MCF 10A (cell line): ENCODE measurements at regions of chr18 and their contacts with region 1.

Region 1: GRCh38 chr18:50356036-50356945 is 18.6 kb upstream of the SKA1 start:
- DNase-seq: peak; percentile 71
- H3K4me3 Mint-ChIP-seq: no peak overlapping the region
- H3K27ac Mint-ChIP-seq: peak overlapping the region; percentile 78
- H3K4me1 Mint-ChIP-seq: peaks cover 15% of the 10 kb centered on the region
- H3K27me3 Mint-ChIP-seq: peaks cover 28% of the 10 kb centered on the region
- CTCF ChIP-seq: no peak

Region 2: GRCh38 chr18:50009773-50010335 is 346.4 kb before region 1 on chr18:
- CTCF ChIA-PET with region 1: interaction called, 5 read pairs
- POLR2A ChIA-PET with region 1: no interaction called
- intact Hi-C with region 1: loop called (anchors 1 kb)
- DNase-seq: peak; percentile 60
- H3K4me3 Mint-ChIP-seq: no peak overlapping the region
- H3K27ac Mint-ChIP-seq: peak overlapping the region; percentile 5
- H3K4me1 Mint-ChIP-seq: peaks cover 21% of the 10 kb centered on the region
- H3K27me3 Mint-ChIP-seq: no peaks in the 10 kb centered on the region
- CTCF ChIP-seq: peak; percentile 33

Region 3: GRCh38 chr18:50111265-50111792 is 245.0 kb before region 1 on chr18:
- CTCF ChIA-PET with region 1: interaction called, 4 read pairs
- POLR2A ChIA-PET with region 1: no interaction called
- intact Hi-C with region 1: loop called (anchors 10 kb)
- DNase-seq: peak; percentile 33
- H3K4me3 Mint-ChIP-seq: no peak overlapping the region
- H3K27ac Mint-ChIP-seq: no peak overlapping the region
- H3K4me1 Mint-ChIP-seq: peaks cover 7% of the 10 kb centered on the region
- H3K27me3 Mint-ChIP-seq: no peaks in the 10 kb centered on the region
- CTCF ChIP-seq: peak; percentile 16

Region 4: GRCh38 chr18:50218432-50219197 is 137.7 kb before region 1 on chr18:
- CTCF ChIA-PET with region 1: interaction called, 103 read pairs
- POLR2A ChIA-PET with region 1: interaction called, 6 read pairs
- intact Hi-C with region 1: loop called (anchors 1 kb)
- DNase-seq: peak; percentile 53
- H3K4me3 Mint-ChIP-seq: no peak overlapping the region
- H3K27ac Mint-ChIP-seq: no peak overlapping the region
- H3K4me1 Mint-ChIP-seq: no peaks in the 10 kb centered on the region
- H3K27me3 Mint-ChIP-seq: no peaks in the 10 kb centered on the region
- CTCF ChIP-seq: peak; percentile 53

Region 5: DNA sequence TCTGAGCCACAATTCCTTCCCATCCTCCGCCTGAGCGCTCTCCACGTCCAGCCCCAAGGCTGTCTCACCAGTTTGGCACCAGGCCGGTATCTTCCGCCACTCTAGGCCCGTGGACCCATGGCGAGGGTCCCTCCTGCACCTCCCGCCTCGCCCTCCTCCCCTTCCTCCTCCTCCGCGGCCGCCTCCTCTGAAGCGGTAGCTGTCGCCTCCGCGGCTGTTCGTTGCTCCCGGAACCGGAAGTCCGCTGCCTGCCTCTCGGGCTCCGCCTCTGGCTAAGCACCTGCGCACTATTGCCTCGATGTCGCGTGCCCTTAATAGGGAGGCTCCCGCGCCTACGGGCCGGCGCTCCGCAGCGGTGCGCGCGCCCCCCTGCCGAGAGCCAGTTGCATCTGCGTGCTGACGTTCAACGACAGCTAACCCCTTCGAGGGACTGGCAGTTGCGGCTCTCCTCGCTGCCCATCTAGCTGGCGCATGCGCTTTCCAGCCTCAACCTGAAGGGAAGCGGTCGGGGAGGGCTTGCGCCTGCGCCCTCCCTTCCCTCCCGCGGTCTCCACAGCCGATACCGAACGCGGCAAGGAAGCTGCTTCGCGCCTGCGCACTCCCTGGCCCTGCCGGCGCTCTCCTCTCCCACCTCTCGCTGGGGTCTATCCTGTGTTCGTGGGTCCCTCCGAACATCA is 74.9 kb before region 1 on chr18 and contains the start of gene MBD1:
- CTCF ChIA-PET with region 1: interaction called, 15 read pairs
- POLR2A ChIA-PET with region 1: interaction called, 11 read pairs
- intact Hi-C with region 1: loop called (anchors 1 kb)
- DNase-seq: peak; percentile 97
- H3K4me3 Mint-ChIP-seq: peak within 1 kb of the TSS; percentile 96
- H3K27ac Mint-ChIP-seq: peak within 1 kb of the TSS; percentile 97
- H3K4me1 Mint-ChIP-seq: peaks cover 54% of the 10 kb centered on the region
- H3K27me3 Mint-ChIP-seq: no peaks in the 10 kb centered on the region
- CTCF ChIP-seq: no peak
- total RNA-seq, gene MBD1: 203 and 227 TPM in 2 replicates

Region 6: DNA sequence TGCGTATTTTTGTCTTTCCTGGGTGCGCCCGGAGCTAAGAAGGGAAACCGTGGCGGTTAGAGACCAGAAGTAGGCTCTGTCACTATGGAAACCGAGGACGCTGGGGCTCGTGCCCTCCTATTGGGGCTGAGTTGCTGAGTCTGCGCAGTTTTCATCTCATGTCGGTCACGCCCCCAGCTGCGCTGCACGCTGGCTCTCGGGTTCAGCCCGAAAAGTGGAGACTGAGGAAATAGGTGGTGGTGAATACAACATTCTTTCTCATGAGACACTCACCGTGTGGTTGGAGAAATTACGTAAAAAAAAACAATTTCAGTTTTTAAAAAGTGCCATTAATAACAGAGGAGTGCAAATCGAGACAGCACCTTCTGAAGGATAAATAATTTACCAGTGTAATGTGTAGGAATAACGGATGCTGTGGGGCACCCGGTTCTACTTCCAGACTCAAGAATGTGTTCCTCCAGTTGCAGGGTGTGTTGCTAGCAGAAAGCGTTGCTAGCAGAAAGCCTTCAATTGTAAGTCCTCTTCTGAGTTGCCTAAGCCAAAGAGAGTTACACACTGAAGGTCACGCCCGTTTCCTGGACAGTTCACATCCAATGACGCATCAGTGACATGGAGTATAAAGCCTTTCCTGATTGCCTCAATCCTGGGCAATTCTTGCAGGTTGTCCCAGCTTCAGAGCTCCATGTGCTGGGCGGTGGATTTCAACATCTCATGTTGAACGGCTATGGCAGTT is 48.4 kb before region 1 on chr18:
- CTCF ChIA-PET with region 1: interaction called, 16 read pairs
- POLR2A ChIA-PET with region 1: interaction called, 8 read pairs
- intact Hi-C with region 1: loop called (anchors 5 kb)
- DNase-seq: peak; percentile 100
- H3K4me3 Mint-ChIP-seq: peak overlapping the region; percentile 88
- H3K27ac Mint-ChIP-seq: peak overlapping the region; percentile 94
- H3K4me1 Mint-ChIP-seq: peaks cover 13% of the 10 kb centered on the region
- H3K27me3 Mint-ChIP-seq: no peaks in the 10 kb centered on the region
- CTCF ChIP-seq: no peak